Heart right ventricle (tissue), 16 donors: ENCODE measurements at regions of chr22 and their contacts with region 1.

Region 1: DNA sequence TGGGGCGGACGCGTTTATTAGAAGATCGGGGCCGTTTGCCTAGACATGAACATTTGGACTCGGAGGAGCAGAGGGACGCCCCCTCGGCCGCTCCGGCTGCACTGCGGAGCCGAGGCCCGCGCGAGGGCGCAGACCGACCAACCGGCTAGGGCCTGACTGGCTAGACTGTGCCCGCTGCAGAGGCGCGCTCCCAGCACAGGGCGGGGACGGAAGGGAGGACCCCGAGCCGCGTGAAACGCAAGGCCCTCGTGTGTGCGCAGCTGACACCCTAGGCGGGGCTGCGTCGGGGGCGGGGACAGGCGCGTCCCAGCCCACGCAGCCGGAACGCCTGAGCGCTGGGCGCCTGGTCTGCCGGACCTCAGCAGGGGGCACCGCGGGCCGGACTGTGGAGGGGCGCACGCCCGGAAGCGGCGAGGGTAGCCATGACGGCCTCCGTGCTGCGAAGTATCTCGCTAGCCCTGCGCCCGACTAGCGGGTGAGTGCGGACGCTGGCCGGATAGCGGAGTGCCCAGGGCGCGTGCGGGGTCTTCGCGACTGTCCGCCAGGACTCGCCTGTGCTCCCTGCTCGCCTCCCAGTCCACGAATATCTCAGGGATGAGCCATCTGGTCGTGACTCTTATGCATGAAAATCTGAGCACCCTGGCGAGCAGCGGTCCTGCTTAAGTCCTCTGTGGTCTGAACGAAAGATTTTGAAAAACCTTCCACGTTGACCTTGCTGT is at the start of gene MRPL40:
- DNase-seq: peak; percentile 95 to 96
- ATAC-seq: peak; percentile 96 to 98 (median 98)
- H3K4me3 ChIP-seq: peak within 1 kb of the TSS; percentile 65 to 94 (median 84)
- H3K27ac ChIP-seq: peak within 1 kb of the TSS; percentile 89 to 99 (median 98)
- H3K4me1 ChIP-seq: peaks cover 7 to 55% (median 34%) of the 10 kb centered on the region in 9 donors
- H3K27me3 ChIP-seq: no peaks in the 10 kb centered on the region
- CTCF ChIP-seq: peak in 3 of 9 donors; percentile 18 to 37 (median 29)
- total RNA-seq, gene MRPL40: 49.2 to 89.9 (median 54.9) TPM

Region 2: GRCh38 chr22:19178656-19179496 is 253.4 kb before region 1 on chr22 and contains the start of gene SLC25A1:
- intact Hi-C with region 1: loop called in 2 of 10 experiments (anchors 5 kb)
- DNase-seq: peak; percentile 90 to 95
- ATAC-seq: peak; percentile 87 to 94 (median 90)
- H3K4me3 ChIP-seq: peak within 1 kb of the TSS; percentile 66 to 96 (median 89)
- H3K27ac ChIP-seq: peak within 1 kb of the TSS; percentile 77 to 93 (median 88)
- H3K4me1 ChIP-seq: peaks cover 16 to 51% (median 37%) of the 10 kb centered on the region in 9 donors
- H3K27me3 ChIP-seq: no peaks in the 10 kb centered on the region
- CTCF ChIP-seq: no peak
- total RNA-seq, gene SLC25A1: 14.8 to 29.1 (median 19.9) TPM

Region 3: GRCh38 chr22:19447388-19448075 is 15.2 kb after region 1 on chr22 and contains the start of gene C22orf39:
- intact Hi-C with region 1: loop called in 2 of 10 experiments (anchors 1 to 2 kb)
- DNase-seq: peak; percentile 86 to 95
- ATAC-seq: peak; percentile 92 to 97 (median 96)
- H3K4me3 ChIP-seq: peak within 1 kb of the TSS; percentile 64 to 97 (median 91)
- H3K27ac ChIP-seq: peak within 1 kb of the TSS; percentile 87 to 97 (median 93)
- H3K4me1 ChIP-seq: peaks cover 20 to 52% (median 37%) of the 10 kb centered on the region in 9 donors
- H3K27me3 ChIP-seq: no peaks in the 10 kb centered on the region
- CTCF ChIP-seq: no peak
- total RNA-seq, gene C22orf39: 47.7 to 123 (median 66.2) TPM